Activated CD4-positive, alpha-beta memory T cell treated with anti-CD3 and anti-CD28 coated beads, Interleukin-2, amount 10 ng/mL, durations not matched to agents 7 days and 5 days (primary cell): ENCODE measurements at regions of chr21 and their contacts with region 1.

Region 1: GRCh38 chr21:36169436-36170128 is 13.0 kb downstream of the DOP1B start:
- DNase-seq: no peak
- H3K4me3 Mint-ChIP-seq: no peak overlapping the region
- H3K27ac Mint-ChIP-seq: no peak overlapping the region
- H3K4me1 Mint-ChIP-seq: peaks cover 20% of the 10 kb centered on the region
- H3K27me3 Mint-ChIP-seq: no peaks in the 10 kb centered on the region

Region 2: DNA sequence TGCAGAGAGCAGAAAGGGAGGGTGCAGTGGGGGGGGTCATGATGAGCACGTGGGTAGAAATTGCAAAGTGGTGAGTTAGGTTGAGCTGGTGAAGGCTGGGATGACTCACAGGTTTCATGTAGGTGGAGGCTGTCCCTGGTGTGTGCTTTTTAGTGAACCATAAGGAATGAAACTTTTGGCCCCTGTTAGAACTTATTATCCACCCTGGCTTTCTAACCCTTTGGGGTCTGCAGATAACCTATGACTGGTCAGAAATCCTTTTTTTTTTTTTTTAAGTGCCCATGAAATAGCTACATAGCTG is 34.0 kb after region 1 on chr21:
- CTCF ChIA-PET with region 1: interaction called, 9 read pairs
- POLR2A ChIA-PET with region 1: interaction called, 10 read pairs
- DNase-seq: peak; percentile 62
- H3K4me3 Mint-ChIP-seq: no peak overlapping the region
- H3K27ac Mint-ChIP-seq: no peak overlapping the region
- H3K4me1 Mint-ChIP-seq: peaks cover 36% of the 10 kb centered on the region
- H3K27me3 Mint-ChIP-seq: no peaks in the 10 kb centered on the region